ENCODE measurements at regions of chr18 and their contacts with region 1.

Region 1: GRCh38 chr18:48007955-48008701 is 77.7 kb upstream of the SMAD2 start:
- DNase-seq: peak; percentile 71 to 82
- ATAC-seq: peak; percentile 62 to 69
- H3K4me3 ChIP-seq: peak overlapping the region; percentile 35
- H3K27ac ChIP-seq: peak overlapping the region; percentile 99
- H3K4me1 ChIP-seq: peaks cover 45% of the 10 kb centered on the region
- CTCF ChIP-seq: peak; percentile 79
- EP300 ChIP-seq: peak in 1 of 2 experiments; percentile 17; a peak in 2 of 5 replicates
- POLR2A ChIP-seq: peak; percentile 52
- RAD21 ChIP-seq: peak in 1 of 2 experiments; percentile 61; a peak in 3 of 5 replicates

Region 2: GRCh38 chr18:47898696-47899095 is 109.4 kb before region 1 on chr18:
- CTCF ChIA-PET with region 1: interaction called, 13 read pairs
- POLR2A ChIA-PET with region 1: interaction called, 5 read pairs
- DNase-seq: no peak
- ATAC-seq: no peak; a peak in 1 of 6 replicates
- H3K4me3 ChIP-seq: peak overlapping the region; percentile 13; the same call in 1 of the 3 replicates
- H3K27ac ChIP-seq: peak overlapping the region; percentile 68 to 77
- H3K4me1 ChIP-seq: peaks cover 88% of the 10 kb centered on the region
- CTCF ChIP-seq: no peak
- EP300 ChIP-seq: no peak
- POLR2A ChIP-seq: no peak
- RAD21 ChIP-seq: no peak

Region 3: DNA sequence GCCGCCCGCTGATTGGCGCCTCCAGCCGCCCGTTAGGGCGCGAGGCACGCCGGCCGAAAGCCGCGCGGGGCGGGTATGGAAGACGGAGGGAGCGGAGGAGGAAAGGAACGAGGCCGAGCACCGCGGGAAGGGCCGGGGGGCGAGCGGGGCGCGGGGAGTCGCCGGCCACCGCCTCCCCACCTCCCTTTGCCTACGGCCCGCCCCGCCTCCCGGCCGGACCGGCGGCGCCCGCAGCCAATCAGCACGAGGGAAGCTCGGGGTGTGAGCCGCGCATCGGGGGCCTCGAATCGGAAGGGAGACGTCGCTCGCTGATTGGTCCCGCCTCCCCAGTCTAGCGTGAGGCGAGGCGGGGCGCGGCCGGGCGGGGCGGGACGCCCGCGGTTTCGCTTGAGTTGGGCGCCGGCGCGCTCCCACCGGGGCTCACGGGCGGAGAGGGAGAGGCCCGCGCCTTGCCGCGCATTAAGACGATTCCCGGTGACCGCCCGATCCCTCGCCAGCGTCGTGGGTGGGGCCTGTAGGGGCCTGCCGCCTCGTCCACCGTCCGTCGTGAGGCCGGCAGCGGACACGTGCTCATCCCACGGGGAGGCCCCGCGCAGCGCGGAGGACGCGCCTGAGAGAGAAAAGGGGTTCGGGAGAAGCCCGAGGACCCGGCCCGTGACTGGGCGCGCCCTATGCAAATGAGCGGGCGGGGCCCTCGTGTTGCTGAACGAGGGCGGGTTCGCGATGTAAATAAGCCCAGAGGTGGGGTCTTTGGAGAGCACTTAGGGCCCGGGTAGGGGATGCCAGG is 77.0 kb before region 1 on chr18:
- CTCF ChIA-PET with region 1: interaction called, 13 read pairs
- POLR2A ChIA-PET with region 1: interaction called, 46 read pairs
- DNase-seq: peak; percentile 68 to 96
- ATAC-seq: peak; percentile 84 to 92
- H3K4me3 ChIP-seq: peak overlapping the region; percentile 87
- H3K27ac ChIP-seq: peak overlapping the region; percentile 98 to 100
- H3K4me1 ChIP-seq: peaks cover 35% of the 10 kb centered on the region
- CTCF ChIP-seq: no peak
- EP300 ChIP-seq: no peak
- POLR2A ChIP-seq: peak; percentile 65
- RAD21 ChIP-seq: no peak

Region 4: DNA sequence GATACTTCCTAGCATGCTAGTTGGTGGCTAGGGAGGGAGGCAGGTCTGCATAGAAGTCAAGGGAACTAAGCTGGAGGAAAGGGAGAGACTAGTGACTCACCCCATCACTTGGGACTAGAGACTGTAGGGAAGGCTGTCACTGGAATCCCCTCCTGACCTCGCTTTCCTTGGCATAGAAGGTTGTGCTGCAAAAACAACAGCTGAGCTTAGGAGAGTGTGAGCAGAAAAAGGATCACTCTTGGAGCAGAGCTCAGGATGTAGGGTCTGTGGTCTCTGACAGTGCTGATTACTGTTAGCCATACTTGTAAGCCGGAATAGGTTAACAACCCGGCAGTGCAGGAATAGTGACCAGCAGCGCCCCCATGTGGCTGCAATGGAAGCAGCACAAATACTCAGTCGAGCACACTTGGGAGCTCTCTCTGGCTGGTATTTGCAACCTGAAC is 10.8 kb before region 1 on chr18:
- CTCF ChIA-PET with region 1: interaction called, 20 read pairs
- POLR2A ChIA-PET with region 1: no interaction called
- DNase-seq: peak in 1 of 2 experiments; percentile 62
- ATAC-seq: no peak
- H3K4me3 ChIP-seq: no peak overlapping the region
- H3K27ac ChIP-seq: peak overlapping the region; percentile 25 to 78; a peak in 4 of 6 replicates
- H3K4me1 ChIP-seq: peaks cover 11% of the 10 kb centered on the region
- CTCF ChIP-seq: peak; percentile 32
- EP300 ChIP-seq: no peak
- POLR2A ChIP-seq: no peak
- RAD21 ChIP-seq: peak in 1 of 2 experiments; percentile 25; a peak in 2 of 5 replicates

Region 5: GRCh38 chr18:48022531-48023329 is 14.6 kb after region 1 on chr18:
- CTCF ChIA-PET with region 1: interaction called, 12 read pairs
- POLR2A ChIA-PET with region 1: interaction called, 5 read pairs
- DNase-seq: peak; percentile 68 to 82
- ATAC-seq: peak; percentile 75 to 89
- H3K4me3 ChIP-seq: no peak overlapping the region
- H3K27ac ChIP-seq: peak overlapping the region; percentile 81 to 91
- H3K4me1 ChIP-seq: peaks cover 59% of the 10 kb centered on the region
- CTCF ChIP-seq: peak; percentile 65
- EP300 ChIP-seq: no peak
- POLR2A ChIP-seq: no peak
- RAD21 ChIP-seq: peak; percentile 82 to 88